HCT116 (cell line): ENCODE measurements at regions of chr1 and their contacts with region 1.

Region 1: GRCh38 chr1:75632350-75632949 is 21.5 kb upstream of the SLC44A5 start:
- DNase-seq: peak; percentile 13
- ATAC-seq: peak; percentile 79
- H3K4me3 ChIP-seq: no peak overlapping the region
- H3K27ac ChIP-seq: no peak overlapping the region
- H3K4me1 ChIP-seq: no peaks in the 10 kb centered on the region
- H3K27me3 ChIP-seq: no peaks in the 10 kb centered on the region
- CTCF ChIP-seq: peak; percentile 63 to 72 (median 64)
- POLR2A ChIP-seq: no peak
- RAD21 ChIP-seq: peak; percentile 74

Region 2: DNA sequence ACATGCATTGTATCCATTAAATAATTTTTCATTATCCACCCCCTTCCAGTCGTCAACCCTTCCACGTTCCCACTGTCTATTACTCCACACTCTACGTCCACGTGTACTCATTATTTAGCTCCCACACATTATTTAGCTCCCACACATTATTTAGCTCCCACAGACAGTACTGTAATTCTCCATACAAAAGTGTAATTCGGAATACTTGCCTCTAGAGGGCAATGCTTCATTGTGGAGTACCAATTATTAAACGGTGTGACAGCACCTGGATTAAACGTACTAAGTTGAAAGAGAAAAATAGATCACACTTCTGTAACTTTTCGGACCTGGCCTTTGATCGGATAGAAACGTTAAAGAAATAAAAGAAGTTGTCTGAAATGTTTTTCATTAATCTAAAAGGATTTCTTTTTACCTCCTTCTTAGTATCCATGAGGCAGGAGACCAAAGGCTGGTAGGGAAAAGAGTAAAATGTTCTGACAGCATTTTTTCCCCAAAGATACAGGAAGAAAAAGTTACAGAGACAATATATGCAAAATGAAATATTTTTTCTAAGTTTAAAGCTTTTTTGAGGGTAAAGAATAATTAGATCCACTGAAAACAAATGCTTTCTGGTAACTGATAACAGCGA is 399.0 kb before region 1 on chr1:
- CTCF ChIA-PET with region 1: interaction called, 9 read pairs
- POLR2A ChIA-PET with region 1: no interaction called
- RAD21 ChIA-PET with region 1: no interaction called
- intact Hi-C with region 1: loop called (anchors 2 kb)
- DNase-seq: peak; percentile 19
- ATAC-seq: peak; percentile 93
- H3K4me3 ChIP-seq: no peak overlapping the region
- H3K27ac ChIP-seq: no peak overlapping the region
- H3K4me1 ChIP-seq: no peaks in the 10 kb centered on the region
- H3K27me3 ChIP-seq: no peaks in the 10 kb centered on the region
- CTCF ChIP-seq: peak; percentile 52 to 85 (median 64); a peak in 5 of 6 replicates
- POLR2A ChIP-seq: no peak
- RAD21 ChIP-seq: peak; percentile 72

Region 3: DNA sequence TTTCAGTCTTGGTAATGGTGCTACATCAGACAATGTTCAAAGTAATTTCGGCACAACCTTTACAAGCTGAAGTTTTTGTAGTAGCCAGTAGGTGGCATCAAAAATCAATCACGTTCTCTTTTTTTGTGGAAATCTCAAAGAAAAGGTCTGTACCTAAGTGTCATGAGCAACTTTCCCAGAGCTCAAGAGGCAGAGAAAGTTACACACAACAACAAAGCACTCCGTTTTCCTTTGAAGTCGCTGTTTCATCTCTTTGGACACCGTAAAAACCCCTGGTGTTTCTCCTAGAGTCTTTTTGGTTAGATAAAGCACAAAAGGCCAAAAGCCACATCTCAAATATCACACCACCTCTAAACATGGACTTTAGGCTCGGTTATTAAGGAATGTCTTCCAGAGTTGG is 366.7 kb before region 1 on chr1:
- CTCF ChIA-PET with region 1: interaction called, 8 read pairs
- POLR2A ChIA-PET with region 1: no interaction called
- RAD21 ChIA-PET with region 1: no interaction called
- intact Hi-C with region 1: loop called (anchors 1 kb)
- DNase-seq: peak; percentile 46
- ATAC-seq: peak; percentile 82
- H3K4me3 ChIP-seq: no peak overlapping the region
- H3K27ac ChIP-seq: no peak overlapping the region
- H3K4me1 ChIP-seq: no peaks in the 10 kb centered on the region
- H3K27me3 ChIP-seq: no peaks in the 10 kb centered on the region
- CTCF ChIP-seq: peak; percentile 48 to 71 (median 56); a peak in 5 of 6 replicates
- POLR2A ChIP-seq: no peak
- RAD21 ChIP-seq: peak; percentile 71

Region 4: DNA sequence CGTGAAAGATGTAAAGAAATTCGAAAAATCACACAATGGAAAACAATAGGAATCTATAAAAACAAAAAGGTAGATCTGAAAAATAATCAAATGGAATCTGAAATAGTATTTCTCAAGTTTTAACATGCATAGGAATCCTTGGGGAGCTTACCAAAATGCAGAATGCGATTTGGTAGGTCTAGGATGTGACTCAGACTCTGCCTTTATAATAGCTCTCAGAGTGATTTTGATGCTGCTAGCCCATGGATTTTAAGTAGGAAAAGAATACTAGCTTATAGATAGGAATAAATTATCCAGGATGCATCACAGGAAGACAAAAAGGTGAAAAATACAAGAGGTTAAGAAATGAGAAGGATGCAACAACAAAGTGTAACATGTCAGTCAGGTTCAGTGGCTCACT is 139.5 kb after region 1 on chr1:
- CTCF ChIA-PET with region 1: no interaction called
- POLR2A ChIA-PET with region 1: no interaction called
- RAD21 ChIA-PET with region 1: no interaction called
- intact Hi-C with region 1: no loop called
- DNase-seq: no peak
- ATAC-seq: no peak
- H3K4me3 ChIP-seq: no peak overlapping the region
- H3K27ac ChIP-seq: no peak overlapping the region
- H3K4me1 ChIP-seq: peaks cover 11 to 24% of the 10 kb centered on the region in 2 experiments
- H3K27me3 ChIP-seq: no peaks in the 10 kb centered on the region
- CTCF ChIP-seq: no peak
- POLR2A ChIP-seq: no peak
- RAD21 ChIP-seq: no peak

Region 5: DNA sequence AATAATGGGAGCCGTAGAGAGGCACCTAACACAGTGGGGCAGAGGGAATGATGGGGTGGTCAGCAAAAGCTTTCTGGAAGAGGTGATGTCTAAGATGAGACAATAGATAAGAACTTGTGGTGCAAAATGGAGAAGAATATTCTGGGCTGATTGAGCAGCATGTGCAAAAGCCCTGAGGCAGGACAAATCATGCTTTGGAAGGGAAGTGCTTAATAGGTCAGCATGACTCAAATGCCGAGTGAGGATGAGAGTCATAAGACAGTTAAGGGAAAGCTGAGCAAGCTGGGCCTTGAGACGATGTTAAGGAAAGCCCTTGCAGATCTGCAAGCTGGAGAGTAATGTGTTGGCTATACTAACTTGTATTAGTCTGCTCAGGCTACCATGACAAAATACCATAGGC is 337.1 kb after region 1 on chr1:
- CTCF ChIA-PET with region 1: no interaction called
- POLR2A ChIA-PET with region 1: no interaction called
- RAD21 ChIA-PET with region 1: no interaction called
- intact Hi-C with region 1: no loop called
- DNase-seq: no peak
- ATAC-seq: no peak
- H3K4me3 ChIP-seq: no peak overlapping the region
- H3K27ac ChIP-seq: no peak overlapping the region
- H3K4me1 ChIP-seq: peaks cover 3 to 5% of the 10 kb centered on the region in 2 experiments
- H3K27me3 ChIP-seq: no peaks in the 10 kb centered on the region
- CTCF ChIP-seq: no peak
- POLR2A ChIP-seq: no peak
- RAD21 ChIP-seq: no peak